Activated CD4-positive, alpha-beta T cell treated with anti-CD3 and anti-CD28 coated beads, Interleukin-2, amount 10 ng/mL, durations not matched to agents 24 days and 14 days (primary cell): ENCODE measurements at regions of chr4 and their contacts with region 1.

Region 1: GRCh38 chr4:184538023-184538599 is 63.8 kb upstream of the IRF2 start:
- DNase-seq: peak; percentile 89
- H3K4me3 Mint-ChIP-seq: peak overlapping the region; percentile 90
- H3K27ac Mint-ChIP-seq: peak overlapping the region; percentile 92
- H3K4me1 Mint-ChIP-seq: peaks cover 33% of the 10 kb centered on the region
- H3K27me3 Mint-ChIP-seq: no peaks in the 10 kb centered on the region

Region 2: DNA sequence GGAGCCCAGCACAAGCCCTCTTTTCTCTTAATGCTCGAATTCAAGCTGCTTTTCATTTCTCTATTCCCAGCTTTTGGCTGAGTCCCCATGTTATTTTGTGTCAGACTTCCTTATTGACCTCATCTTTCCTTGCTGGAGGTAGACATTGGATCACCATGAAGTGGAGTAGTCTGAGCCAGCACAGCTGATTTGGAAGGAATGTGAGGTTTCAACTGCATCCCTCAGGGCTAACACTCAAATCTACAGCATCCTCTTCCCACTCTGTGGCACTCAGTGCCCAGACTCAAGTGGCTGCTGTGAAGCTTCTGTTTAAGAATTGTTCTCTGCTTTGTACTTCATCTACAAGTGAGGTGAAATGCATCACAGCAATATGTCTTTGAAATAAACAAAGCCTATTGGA is 872.7 kb before region 1 on chr4:
- intact Hi-C with region 1: no loop called
- DNase-seq: no peak
- H3K4me3 Mint-ChIP-seq: no peak overlapping the region
- H3K27ac Mint-ChIP-seq: no peak overlapping the region
- H3K4me1 Mint-ChIP-seq: peaks cover 7% of the 10 kb centered on the region
- H3K27me3 Mint-ChIP-seq: no peaks in the 10 kb centered on the region

Region 3: GRCh38 chr4:184287697-184288255 is 250.3 kb before region 1 on chr4:
- intact Hi-C with region 1: loop called (anchors 1 kb)
- DNase-seq: peak; percentile 64
- H3K4me3 Mint-ChIP-seq: peak overlapping the region; percentile 57
- H3K27ac Mint-ChIP-seq: peak overlapping the region; percentile 89
- H3K4me1 Mint-ChIP-seq: peaks cover 45% of the 10 kb centered on the region
- H3K27me3 Mint-ChIP-seq: no peaks in the 10 kb centered on the region

Region 4: DNA sequence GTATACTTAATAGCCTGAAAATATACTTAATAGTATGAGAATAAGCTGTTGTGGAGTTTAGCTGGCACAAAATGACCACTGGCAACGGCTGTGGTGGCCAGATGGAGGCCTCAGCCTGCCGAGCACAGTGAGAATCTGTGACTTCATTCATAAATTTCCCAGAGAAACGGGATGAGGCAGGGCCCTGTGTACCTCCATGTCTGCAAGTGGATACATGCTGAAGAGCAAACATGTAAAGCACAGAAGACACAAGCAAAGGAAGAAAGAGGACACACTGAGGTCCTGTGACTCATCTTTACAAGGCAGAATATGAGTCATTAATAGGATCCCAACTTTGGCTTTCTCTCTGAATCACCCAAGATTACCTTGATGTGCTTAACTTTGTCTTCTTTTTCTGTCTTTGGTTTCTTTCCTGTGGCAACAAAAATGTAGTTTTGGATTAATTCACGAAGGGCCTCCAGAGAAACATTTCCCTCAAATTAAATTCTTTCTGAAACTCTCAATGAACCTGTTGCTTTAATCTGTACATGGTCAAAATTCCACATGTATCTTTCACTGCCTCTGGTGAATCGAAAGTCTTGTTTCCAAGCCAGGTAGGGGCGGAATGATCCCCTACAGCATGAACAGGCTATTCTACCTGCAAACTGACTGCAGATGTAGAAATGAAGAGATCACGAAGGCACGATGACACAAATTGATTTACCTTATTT is 120.2 kb before region 1 on chr4:
- intact Hi-C with region 1: loop called (anchors 1 kb)
- DNase-seq: peak; percentile 77
- H3K4me3 Mint-ChIP-seq: peak overlapping the region; percentile 56
- H3K27ac Mint-ChIP-seq: peak overlapping the region; percentile 86
- H3K4me1 Mint-ChIP-seq: peaks cover 68% of the 10 kb centered on the region
- H3K27me3 Mint-ChIP-seq: no peaks in the 10 kb centered on the region

Region 5: GRCh38 chr4:184498598-184498997 is 39.5 kb before region 1 on chr4:
- intact Hi-C with region 1: no loop called
- DNase-seq: no peak
- H3K4me3 Mint-ChIP-seq: no peak overlapping the region
- H3K27ac Mint-ChIP-seq: no peak overlapping the region
- H3K4me1 Mint-ChIP-seq: peaks cover 3% of the 10 kb centered on the region
- H3K27me3 Mint-ChIP-seq: no peaks in the 10 kb centered on the region

Region 6: DNA sequence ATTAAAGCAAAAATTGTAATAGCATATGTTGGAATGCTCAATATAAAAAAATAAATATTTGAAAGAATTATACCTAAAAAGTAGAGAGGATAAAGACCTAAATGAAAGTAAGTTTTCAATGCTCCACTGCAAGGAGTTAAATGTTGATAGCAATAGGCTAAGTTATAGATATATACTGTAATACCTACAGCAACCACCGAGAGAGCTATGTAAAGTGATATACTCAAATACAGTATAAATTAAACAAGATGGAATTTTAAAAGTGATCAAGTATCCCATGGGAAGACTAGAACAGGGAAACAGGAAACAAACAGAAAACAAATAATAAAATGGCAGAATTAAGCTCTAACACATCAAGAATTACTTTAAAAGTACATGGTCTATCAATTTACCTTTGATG is 37.2 kb after region 1 on chr4:
- intact Hi-C with region 1: loop called (anchors 1 kb)
- DNase-seq: no peak
- H3K4me3 Mint-ChIP-seq: no peak overlapping the region
- H3K27ac Mint-ChIP-seq: peak overlapping the region; percentile 77
- H3K4me1 Mint-ChIP-seq: peaks cover 14% of the 10 kb centered on the region
- H3K27me3 Mint-ChIP-seq: no peaks in the 10 kb centered on the region

Region 7: GRCh38 chr4:184762100-184762499 is 224.0 kb after region 1 on chr4:
- intact Hi-C with region 1: no loop called
- DNase-seq: peak; percentile 90
- H3K4me3 Mint-ChIP-seq: peak overlapping the region; percentile 71
- H3K27ac Mint-ChIP-seq: peak overlapping the region; percentile 93
- H3K4me1 Mint-ChIP-seq: peaks cover 19% of the 10 kb centered on the region
- H3K27me3 Mint-ChIP-seq: no peaks in the 10 kb centered on the region

Region 8: GRCh38 chr4:185203486-185204237 is 665.6 kb after region 1 on chr4 and contains the start of gene CFAP97:
- intact Hi-C with region 1: loop called (anchors 10 kb)
- DNase-seq: peak; percentile 95
- H3K4me3 Mint-ChIP-seq: peak within 1 kb of the TSS; percentile 97
- H3K27ac Mint-ChIP-seq: peak within 1 kb of the TSS; percentile 99
- H3K4me1 Mint-ChIP-seq: peaks cover 36% of the 10 kb centered on the region
- H3K27me3 Mint-ChIP-seq: no peaks in the 10 kb centered on the region
- total RNA-seq, gene CFAP97: 56.6 and 59.3 TPM in 2 replicates